ENCODE measurements at regions of chr3 and their contacts with region 1.

Region 1: DNA sequence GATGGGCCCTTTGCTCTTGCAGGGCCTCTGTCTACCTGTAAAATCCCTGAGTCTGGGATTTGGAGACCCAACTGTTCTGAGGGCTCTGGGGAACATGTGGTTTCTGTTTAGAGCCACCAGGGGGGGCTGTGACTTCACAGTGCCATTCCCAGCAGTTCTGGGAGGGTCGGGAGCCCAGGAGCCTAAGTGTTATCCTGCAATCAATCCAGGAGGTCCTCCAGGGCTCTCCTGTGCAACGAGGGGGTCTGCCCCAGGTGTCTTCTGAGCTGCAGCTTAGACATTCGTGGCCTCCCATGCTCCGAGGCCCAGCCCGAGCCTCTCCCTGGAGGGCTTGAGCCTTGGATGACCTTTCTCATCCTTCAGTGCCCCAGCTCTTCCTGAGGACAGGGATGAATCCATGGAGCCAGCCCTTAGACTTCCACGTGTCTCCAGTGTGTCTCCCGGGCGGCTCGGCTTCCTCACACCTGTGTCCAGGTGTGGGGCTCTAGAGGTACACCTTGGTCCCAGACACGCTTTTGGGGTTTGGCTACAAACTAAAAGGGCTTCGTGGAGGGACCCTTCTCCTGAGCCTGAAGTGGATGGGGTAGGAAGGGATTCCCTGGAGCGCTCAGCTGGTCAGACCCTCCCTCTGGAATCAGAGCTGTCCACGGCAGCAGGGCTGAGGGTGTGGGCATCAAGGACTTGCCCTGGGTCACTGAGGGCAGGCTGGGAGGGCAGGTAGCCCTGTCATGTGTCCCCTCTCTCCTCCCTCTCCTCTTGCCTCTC is 20.3 kb upstream of the ABTB1 start:
- DNase-seq: peak in 1 of 2 donors; percentile 48
- ATAC-seq: peak; percentile 77

Region 2: DNA sequence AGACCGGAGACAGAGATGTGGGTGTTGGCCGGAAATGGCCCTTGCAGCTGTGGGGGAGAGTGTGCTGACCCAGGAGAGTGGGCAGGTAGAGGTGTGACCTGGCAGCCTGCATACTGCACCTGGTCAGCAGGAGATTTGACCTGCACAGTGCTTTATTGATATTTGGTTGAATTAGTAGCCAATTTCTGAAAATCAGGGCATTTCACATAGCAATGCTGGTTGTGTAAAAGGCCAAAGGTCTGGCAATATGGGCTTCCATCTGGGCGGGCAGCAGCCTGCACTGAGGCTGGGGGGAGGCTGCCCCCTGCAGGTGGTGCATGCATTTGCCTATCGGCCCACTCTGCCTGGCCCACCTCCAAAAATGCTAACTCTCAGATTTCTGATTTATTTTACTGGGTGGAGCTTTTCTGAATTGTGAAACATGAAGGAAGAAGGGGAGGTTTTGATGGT is 179.3 kb after region 1 on chr3:
- intact Hi-C with region 1: loop called in 1 of 2 experiments (anchors 5 kb)
- DNase-seq: peak; percentile 45 to 75
- ATAC-seq: peak; percentile 91

Region 3: GRCh38 chr3:127970966-127971592 is 318.7 kb after region 1 on chr3:
- intact Hi-C with region 1: loop called in 1 of 2 experiments (anchors 5 kb)
- DNase-seq: peak in 1 of 2 donors; percentile 27
- ATAC-seq: peak; percentile 89